Posterior vena cava (tissue), 2 donors: ENCODE measurements at regions of chr16 and their contacts with region 1.

Region 1: DNA sequence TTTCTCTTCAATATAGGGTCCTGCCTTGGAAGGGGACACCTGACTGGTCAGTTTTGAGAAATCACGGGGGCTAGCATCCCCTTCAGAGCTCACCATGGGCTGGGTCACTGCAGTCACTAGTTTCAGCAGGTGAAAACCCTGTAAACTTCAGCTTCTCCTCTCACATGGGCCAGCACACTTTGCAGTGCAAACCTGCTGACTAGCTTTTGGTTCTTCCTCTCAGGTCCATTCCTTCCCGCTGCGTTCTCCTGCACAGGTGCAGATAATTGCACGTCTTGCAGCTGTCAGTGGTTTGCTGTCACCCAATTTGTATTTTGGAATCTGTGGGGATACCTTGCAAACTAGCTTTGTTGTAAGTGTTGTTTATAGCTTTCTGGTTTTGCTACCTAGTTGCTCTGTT is 95.1 kb downstream of the LYRM1 start:
- DNase-seq: no peak

Region 2: DNA sequence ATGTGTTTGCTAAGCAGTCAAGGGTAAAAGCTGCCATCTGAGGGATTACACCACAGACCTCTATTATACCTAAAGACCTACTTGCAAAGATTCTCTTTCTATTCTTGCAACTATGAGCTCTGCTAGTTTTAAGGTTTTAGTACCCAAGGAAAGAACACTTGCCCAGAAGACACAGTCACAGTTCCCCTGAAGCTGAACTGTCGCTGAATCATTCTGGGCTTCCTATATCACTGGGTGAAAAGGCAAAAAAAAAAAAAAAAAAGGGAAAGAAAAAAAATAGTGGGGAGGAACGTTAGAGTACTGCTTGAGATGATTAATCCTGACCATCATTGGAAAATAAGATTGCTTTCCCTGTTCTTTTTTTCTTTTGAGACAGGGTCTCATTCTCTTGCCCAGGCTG is 57.3 kb before region 1 on chr16:
- intact Hi-C with region 1: loop called in 1 of 2 experiments (anchors 10 kb)
- DNase-seq: no peak